ENCODE measurements at regions of chr21 and their contacts with region 1.

Region 1: DNA sequence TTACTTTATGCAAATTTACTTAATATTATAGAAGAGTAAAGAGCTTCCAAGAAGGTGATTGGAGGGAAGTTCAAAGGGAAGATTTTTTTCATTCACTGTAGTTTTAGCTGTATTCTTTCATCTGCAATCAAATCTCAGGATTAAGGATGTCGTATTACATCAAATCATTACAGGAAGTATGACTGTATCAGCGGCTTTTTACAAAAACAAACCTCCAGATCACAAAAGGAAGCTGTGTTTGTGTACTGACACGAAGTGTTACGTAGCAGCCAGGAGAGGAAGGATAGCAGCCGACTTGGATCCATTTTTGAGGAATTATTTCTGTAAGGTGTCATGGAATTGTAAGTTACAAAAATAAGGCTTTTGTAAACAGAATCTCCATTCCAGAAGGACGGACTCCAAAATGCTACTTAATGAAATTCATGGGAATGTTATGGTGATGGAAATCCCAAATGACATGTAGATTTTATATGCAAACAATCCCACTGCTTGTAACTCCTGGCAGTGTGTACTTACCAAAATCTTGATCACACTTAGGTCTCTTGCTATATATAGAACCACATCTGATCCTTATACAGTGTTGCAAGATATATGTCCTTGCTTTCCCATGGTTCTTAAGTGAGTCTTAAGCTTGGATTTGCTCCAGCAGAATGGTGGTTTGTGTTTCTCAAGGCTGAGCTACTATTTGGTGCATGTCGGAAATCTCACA is 49.8 kb downstream of the KCNJ15 start:
- DNase-seq: peak in 7 of 9 donors; percentile 43 to 84 (median 75)
- ATAC-seq: peak; percentile 90
- H3K4me3 ChIP-seq: peak overlapping the region; percentile 31
- H3K4me3 Mint-ChIP-seq: peak overlapping the region; percentile 0 to 64 (median 41)
- H3K27ac ChIP-seq: peak overlapping the region; percentile 33
- H3K27ac Mint-ChIP-seq: peak overlapping the region in 8 of 9 donors; percentile 46 to 96 (median 90)
- H3K4me1 ChIP-seq: peaks cover 0 to 15% of the 10 kb centered on the region in 2 donors
- H3K4me1 Mint-ChIP-seq: peaks cover 0 to 34% (median 13%) of the 10 kb centered on the region in 7 donors
- H3K27me3 ChIP-seq: no peaks in the 10 kb centered on the region
- H3K27me3 Mint-ChIP-seq: no peaks in the 10 kb centered on the region

Region 2: DNA sequence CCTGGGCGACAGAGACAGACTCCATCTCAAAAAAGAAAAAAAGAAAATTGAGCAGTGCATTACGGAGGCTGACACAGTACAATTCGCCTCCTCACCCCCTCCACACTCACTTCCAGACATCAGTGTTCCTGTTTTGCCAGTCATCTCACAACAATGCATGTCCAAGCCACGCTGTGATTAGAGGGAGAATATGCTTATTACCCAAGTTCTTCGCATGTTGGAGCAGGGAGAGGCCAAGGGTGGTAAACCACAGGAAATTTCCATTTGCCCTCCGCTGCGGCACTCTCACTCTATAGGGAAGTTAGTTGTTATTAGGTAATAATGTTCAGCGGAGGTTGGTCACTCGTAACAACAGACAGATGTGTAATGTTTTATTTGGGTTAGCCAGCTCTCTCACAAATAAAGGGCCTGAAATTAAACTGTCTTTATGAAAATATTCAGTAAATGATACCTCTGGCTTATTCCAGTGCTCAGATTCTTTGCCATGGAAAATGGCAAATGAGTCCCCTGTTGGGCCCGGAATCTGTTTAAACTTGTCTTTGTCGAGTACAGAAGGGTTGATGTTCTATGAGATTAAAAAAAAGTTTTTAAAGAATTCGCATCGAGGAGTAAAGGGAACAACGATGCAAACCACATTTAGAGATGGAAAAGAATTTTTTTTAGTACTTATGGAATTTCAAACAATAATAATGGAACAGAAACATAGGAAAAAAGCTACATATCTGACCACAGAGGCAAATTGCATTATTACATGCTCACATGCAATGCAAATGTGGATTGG is 16.7 kb before region 1 on chr21:
- CTCF ChIA-PET with region 1: interaction called, 7 read pairs
- POLR2A ChIA-PET with region 1: interaction called, 15 read pairs
- intact Hi-C with region 1: loop called in 1 of 2 experiments (anchors 1 kb)
- DNase-seq: no peak
- ATAC-seq: peak; percentile 88
- H3K4me3 ChIP-seq: no peak overlapping the region
- H3K4me3 Mint-ChIP-seq: no peak overlapping the region
- H3K27ac ChIP-seq: no peak overlapping the region
- H3K27ac Mint-ChIP-seq: no peak overlapping the region
- H3K4me1 ChIP-seq: peaks cover 0 to 20% of the 10 kb centered on the region in 2 donors
- H3K4me1 Mint-ChIP-seq: peaks cover 0 to 28% (median 19%) of the 10 kb centered on the region in 7 donors
- H3K27me3 ChIP-seq: no peaks in the 10 kb centered on the region
- H3K27me3 Mint-ChIP-seq: peaks cover 0 to 9% (median 0%) of the 10 kb centered on the region in 5 donors

Region 3: GRCh38 chr21:38323721-38324531 is 17.3 kb after region 1 on chr21:
- CTCF ChIA-PET with region 1: interaction called, 8 read pairs
- POLR2A ChIA-PET with region 1: interaction called, 3 read pairs
- intact Hi-C with region 1: loop called in 1 of 2 experiments (anchors 1 kb)
- DNase-seq: peak in 7 of 9 donors; percentile 51 to 79 (median 70)
- ATAC-seq: peak; percentile 97
- H3K4me3 ChIP-seq: peak overlapping the region; percentile 17
- H3K4me3 Mint-ChIP-seq: peak overlapping the region; percentile 36 to 73 (median 55)
- H3K27ac ChIP-seq: no peak overlapping the region
- H3K27ac Mint-ChIP-seq: peak overlapping the region; percentile 39 to 99 (median 92)
- H3K4me1 ChIP-seq: peaks cover 0 to 24% of the 10 kb centered on the region in 2 donors
- H3K4me1 Mint-ChIP-seq: peaks cover 17 to 44% (median 26%) of the 10 kb centered on the region in 7 donors
- H3K27me3 ChIP-seq: no peaks in the 10 kb centered on the region
- H3K27me3 Mint-ChIP-seq: peaks cover 0 to 5% (median 0%) of the 10 kb centered on the region in 5 donors

Measured in naive thymus-derived CD4-positive, alpha-beta T cell (primary cell).